Mucosa of descending colon (tissue), 3 donors: ENCODE measurements at regions of chr12 and their contacts with region 1.

Region 1: GRCh38 chr12:65121049-65121955 is at the start of gene WIF1:
- DNase-seq: peak; percentile 14 to 51 (median 44)
- ATAC-seq: peak; percentile 55
- H3K4me3 ChIP-seq: no peak within 1 kb of the TSS
- H3K4me1 ChIP-seq: peaks cover 7% of the 10 kb centered on the region
- CTCF ChIP-seq: no peak
- total RNA-seq, gene WIF1: 0.19 TPM in 1 of 3 donors, not detected in the others

Region 2: DNA sequence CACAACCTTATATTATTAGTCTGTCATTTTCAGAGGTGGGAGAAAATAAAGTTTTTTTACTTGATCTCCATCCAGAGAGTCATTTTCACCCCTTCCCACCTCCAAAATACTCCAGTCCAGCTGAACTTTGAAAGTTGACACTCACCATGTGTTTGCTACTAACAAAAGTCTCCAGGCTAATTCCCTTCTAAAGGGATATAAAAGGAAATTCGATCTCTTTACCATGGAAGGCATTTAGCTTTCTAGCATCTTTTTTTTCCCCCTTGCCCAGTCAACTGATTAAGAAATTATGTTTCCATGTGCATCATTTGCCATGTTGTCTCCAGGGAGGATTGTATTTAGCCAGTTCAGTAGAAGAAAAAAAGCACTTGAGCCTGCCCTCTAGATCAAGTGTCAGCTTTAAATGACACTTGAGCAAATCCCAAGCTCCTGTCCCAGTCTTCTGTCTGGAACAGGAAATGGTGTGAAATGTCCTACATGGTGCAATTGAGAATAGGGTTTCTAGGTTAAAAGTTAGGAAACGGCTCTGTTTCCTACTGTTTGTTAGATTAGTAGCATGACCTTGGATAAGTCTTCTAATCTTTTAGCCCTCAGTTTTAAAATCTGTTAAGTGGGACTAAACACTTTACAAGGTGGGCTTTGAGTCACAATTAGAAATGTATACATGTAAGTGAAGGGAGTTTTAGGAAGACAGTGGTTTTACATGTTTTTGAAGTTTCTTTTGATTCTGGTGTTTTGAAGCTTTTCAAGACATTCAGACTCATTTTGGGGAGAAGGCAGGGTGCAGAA is 429.3 kb before region 1 on chr12:
- intact Hi-C with region 1: no loop called
- DNase-seq: no peak
- ATAC-seq: no peak
- H3K4me3 ChIP-seq: no peak overlapping the region
- H3K4me1 ChIP-seq: peaks cover 4% of the 10 kb centered on the region
- CTCF ChIP-seq: no peak

Region 3: GRCh38 chr12:64801381-64801780 is 319.9 kb before region 1 on chr12:
- intact Hi-C with region 1: loop called in 1 of 2 experiments (anchors 5 kb)
- DNase-seq: no peak
- ATAC-seq: no peak
- H3K4me3 ChIP-seq: no peak overlapping the region
- H3K4me1 ChIP-seq: no peaks in the 10 kb centered on the region
- CTCF ChIP-seq: no peak

Region 4: GRCh38 chr12:64890873-64891468 is 230.3 kb before region 1 on chr12:
- intact Hi-C with region 1: loop called (anchors 5 kb)
- DNase-seq: peak in 1 of 3 donors; percentile 5
- ATAC-seq: peak; percentile 82
- H3K4me3 ChIP-seq: no peak overlapping the region
- H3K4me1 ChIP-seq: no peaks in the 10 kb centered on the region
- CTCF ChIP-seq: peak; percentile 27

Region 5: GRCh38 chr12:65500091-65500900 is 379.0 kb after region 1 on chr12:
- intact Hi-C with region 1: no loop called
- DNase-seq: no peak
- ATAC-seq: no peak
- H3K4me3 ChIP-seq: no peak overlapping the region
- H3K4me1 ChIP-seq: no peaks in the 10 kb centered on the region
- CTCF ChIP-seq: no peak